HepG2 (cell line): ENCODE measurements at regions of chr17 and their contacts with region 1.

Region 1: GRCh38 chr17:14373614-14374259 is 72.9 kb downstream of the HS3ST3B1 start:
- DNase-seq: peak; percentile 93
- ATAC-seq: peak; percentile 76
- H3K4me3 ChIP-seq: peak overlapping the region; percentile 55 to 87 (median 68)
- H3K27ac ChIP-seq: peak overlapping the region; percentile 99
- H3K4me1 ChIP-seq: peaks cover 50% of the 10 kb centered on the region
- H3K27me3 ChIP-seq: no peaks in the 10 kb centered on the region; a peak in 1 of 5 replicates
- CTCF ChIP-seq: peak; percentile 34
- EP300 ChIP-seq: peak in 1 of 2 experiments; percentile 76; a peak in 2 of 4 replicates
- POLR2A ChIP-seq: peak; percentile 94 to 98
- RAD21 ChIP-seq: peak; percentile 31

Region 2: DNA sequence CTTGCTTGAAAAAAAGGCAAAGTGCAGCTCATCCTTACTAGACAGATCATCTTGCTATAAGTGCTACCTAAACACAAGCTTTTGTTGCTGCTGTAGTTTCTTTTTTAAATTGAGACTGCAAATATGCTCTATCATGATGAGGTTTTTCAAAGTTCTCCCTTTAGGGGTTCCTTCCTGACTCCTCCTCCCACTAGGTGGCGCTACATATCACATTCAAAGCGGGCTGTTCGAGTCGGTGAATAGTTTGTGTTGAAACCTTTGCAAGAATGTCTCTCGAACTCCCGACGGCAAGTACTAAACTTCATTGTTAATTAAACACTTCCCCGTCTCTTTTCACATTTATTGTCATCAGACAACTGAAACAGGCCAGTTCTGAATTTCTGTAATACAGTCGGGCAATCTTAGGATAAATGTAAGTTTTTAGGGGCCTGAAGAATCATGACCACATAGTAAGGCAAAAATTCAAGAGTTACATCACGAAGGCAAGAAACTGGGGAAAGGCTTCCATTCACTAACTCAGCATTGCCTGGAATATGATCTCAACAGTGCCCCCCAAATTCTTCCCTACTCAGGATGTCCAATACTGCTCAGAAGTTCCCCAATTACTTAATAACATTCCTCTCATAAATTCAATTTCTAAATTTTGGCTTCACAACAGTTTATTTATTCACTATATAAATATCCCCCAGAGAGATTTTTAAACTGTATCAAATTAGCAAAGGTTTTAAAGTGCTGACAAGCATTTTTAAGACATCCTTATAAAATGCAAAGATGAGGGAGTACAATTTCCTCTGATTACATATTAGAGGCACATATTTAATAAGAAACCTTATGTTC is 778.8 kb before region 1 on chr17:
- CTCF ChIA-PET with region 1: no interaction called
- POLR2A ChIA-PET with region 1: no interaction called
- in situ Hi-C with region 1: no loop called
- intact Hi-C with region 1: loop called (anchors 10 kb)
- DNase-seq: peak; percentile 68
- ATAC-seq: peak; percentile 78
- H3K4me3 ChIP-seq: no peak overlapping the region
- H3K27ac ChIP-seq: no peak overlapping the region
- H3K4me1 ChIP-seq: peaks cover 38% of the 10 kb centered on the region
- H3K27me3 ChIP-seq: peaks cover 0 to 19% of the 10 kb centered on the region in 2 experiments; a peak in 4 of 5 replicates
- CTCF ChIP-seq: peak; percentile 80
- EP300 ChIP-seq: no peak
- POLR2A ChIP-seq: no peak
- RAD21 ChIP-seq: peak; percentile 53; the same call in 1 of the 2 replicates

Region 3: GRCh38 chr17:14300575-14301278 is 73.0 kb before region 1 on chr17 and contains the start of gene HS3ST3B1:
- CTCF ChIA-PET with region 1: no interaction called
- POLR2A ChIA-PET with region 1: interaction called, 288 read pairs
- in situ Hi-C with region 1: loop called (anchors 5 kb)
- intact Hi-C with region 1: loop called (anchors 1 kb)
- DNase-seq: peak; percentile 99
- ATAC-seq: peak; percentile 83
- H3K4me3 ChIP-seq: peak within 1 kb of the TSS; percentile 92 to 99 (median 99)
- H3K27ac ChIP-seq: peak within 1 kb of the TSS; percentile 93
- H3K4me1 ChIP-seq: peaks cover 17% of the 10 kb centered on the region
- H3K27me3 ChIP-seq: peaks cover 0 to 10% of the 10 kb centered on the region in 2 experiments; a peak in 2 of 5 replicates
- CTCF ChIP-seq: peak; percentile 37; the same call in 1 of the 2 replicates
- EP300 ChIP-seq: peak in 1 of 2 experiments; percentile 12; a peak in 1 of 4 replicates
- POLR2A ChIP-seq: peak; percentile 93 to 94
- RAD21 ChIP-seq: peak; percentile 60; the same call in 1 of the 2 replicates
- total RNA-seq, gene HS3ST3B1: 35.3 and 39.5 TPM in 2 replicates

Region 4: DNA sequence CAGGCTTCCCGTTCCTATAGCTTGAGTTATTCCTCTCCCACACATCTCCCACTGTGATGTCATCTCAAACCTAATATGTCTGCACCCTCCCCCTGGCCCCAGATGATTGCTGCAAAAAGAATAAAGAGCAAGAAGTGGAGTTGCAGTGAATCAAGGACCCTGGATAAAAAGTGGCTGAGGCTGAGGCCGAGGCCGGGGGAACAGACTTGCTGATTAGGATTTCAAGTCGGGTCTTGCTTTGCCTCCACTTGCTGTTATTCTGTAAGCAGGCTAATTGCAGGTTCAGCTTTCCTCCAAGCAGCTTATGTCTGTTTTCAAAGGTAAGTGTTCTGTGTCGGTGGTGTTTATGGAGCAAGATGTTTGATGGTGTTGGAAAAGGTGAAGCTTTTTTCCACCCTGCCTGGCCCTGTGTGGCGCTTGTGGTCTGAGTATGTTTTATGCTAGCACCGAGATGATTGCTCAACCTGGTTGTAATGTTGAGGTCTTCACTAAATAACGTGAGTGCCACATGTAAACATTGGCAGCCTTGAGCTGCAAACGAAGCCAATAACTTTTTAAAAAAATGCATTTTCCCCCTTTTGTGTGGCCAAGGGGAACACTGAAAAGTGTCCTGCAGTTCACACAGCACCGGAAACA is 57.5 kb before region 1 on chr17:
- CTCF ChIA-PET with region 1: no interaction called
- POLR2A ChIA-PET with region 1: interaction called, 45 read pairs
- in situ Hi-C with region 1: no loop called
- intact Hi-C with region 1: no loop called
- DNase-seq: peak; percentile 71
- ATAC-seq: peak; percentile 74
- H3K4me3 ChIP-seq: peak overlapping the region in 1 of 3 experiments; percentile 9; a peak in 1 of 6 replicates
- H3K27ac ChIP-seq: peak overlapping the region; percentile 41
- H3K4me1 ChIP-seq: peaks cover 79% of the 10 kb centered on the region
- H3K27me3 ChIP-seq: no peaks in the 10 kb centered on the region
- CTCF ChIP-seq: peak; percentile 58
- EP300 ChIP-seq: no peak
- POLR2A ChIP-seq: no peak
- RAD21 ChIP-seq: peak; percentile 34; the same call in 1 of the 2 replicates

Region 5: GRCh38 chr17:14330486-14331029 is 43.2 kb before region 1 on chr17:
- CTCF ChIA-PET with region 1: no interaction called
- POLR2A ChIA-PET with region 1: interaction called, 30 read pairs
- in situ Hi-C with region 1: no loop called
- intact Hi-C with region 1: loop called (anchors 1 kb)
- DNase-seq: peak; percentile 65
- ATAC-seq: peak; percentile 76
- H3K4me3 ChIP-seq: no peak overlapping the region
- H3K27ac ChIP-seq: peak overlapping the region; percentile 71
- H3K4me1 ChIP-seq: peaks cover 90% of the 10 kb centered on the region
- H3K27me3 ChIP-seq: no peaks in the 10 kb centered on the region
- CTCF ChIP-seq: no peak
- EP300 ChIP-seq: peak; percentile 55 to 61; a peak in 2 of 4 replicates
- POLR2A ChIP-seq: no peak
- RAD21 ChIP-seq: no peak

Region 6: DNA sequence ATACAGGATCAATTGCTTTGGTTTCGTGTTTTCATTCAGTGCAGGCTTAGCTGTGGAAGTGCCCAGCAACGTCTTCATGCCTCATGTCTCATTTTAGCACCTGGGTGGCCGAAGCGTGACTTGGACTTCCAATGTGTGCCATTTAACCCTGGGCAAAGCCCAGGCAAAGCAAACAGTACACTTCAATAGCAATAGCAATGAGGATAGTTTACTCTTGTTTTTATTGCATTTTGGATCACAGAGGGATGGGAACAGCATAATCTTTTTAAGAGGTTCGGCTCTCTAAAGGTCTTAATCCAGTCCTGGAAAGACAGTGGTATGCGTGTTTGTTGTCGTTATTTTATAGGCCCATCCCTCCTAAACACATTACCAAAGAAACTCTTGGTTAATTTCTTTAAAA is 13.3 kb after region 1 on chr17:
- CTCF ChIA-PET with region 1: no interaction called
- POLR2A ChIA-PET with region 1: interaction called, 28 read pairs
- in situ Hi-C with region 1: no loop called
- intact Hi-C with region 1: no loop called
- DNase-seq: no peak
- ATAC-seq: no peak
- H3K4me3 ChIP-seq: no peak overlapping the region
- H3K27ac ChIP-seq: no peak overlapping the region
- H3K4me1 ChIP-seq: peaks cover 10% of the 10 kb centered on the region; the same call in 1 of the 2 replicates
- H3K27me3 ChIP-seq: no peaks in the 10 kb centered on the region
- CTCF ChIP-seq: no peak
- EP300 ChIP-seq: no peak
- POLR2A ChIP-seq: no peak
- RAD21 ChIP-seq: no peak

Region 7: GRCh38 chr17:14434261-14434905 is 60.6 kb after region 1 on chr17:
- CTCF ChIA-PET with region 1: no interaction called
- POLR2A ChIA-PET with region 1: no interaction called
- in situ Hi-C with region 1: no loop called
- intact Hi-C with region 1: no loop called
- DNase-seq: no peak
- ATAC-seq: no peak; the same call in 2 of the 3 replicates
- H3K4me3 ChIP-seq: no peak overlapping the region
- H3K27ac ChIP-seq: no peak overlapping the region
- H3K4me1 ChIP-seq: no peaks in the 10 kb centered on the region
- H3K27me3 ChIP-seq: no peaks in the 10 kb centered on the region
- CTCF ChIP-seq: no peak
- EP300 ChIP-seq: no peak
- POLR2A ChIP-seq: no peak
- RAD21 ChIP-seq: no peak